ENCODE measurements at regions of chr10 and their contacts with region 1.

Region 1: DNA sequence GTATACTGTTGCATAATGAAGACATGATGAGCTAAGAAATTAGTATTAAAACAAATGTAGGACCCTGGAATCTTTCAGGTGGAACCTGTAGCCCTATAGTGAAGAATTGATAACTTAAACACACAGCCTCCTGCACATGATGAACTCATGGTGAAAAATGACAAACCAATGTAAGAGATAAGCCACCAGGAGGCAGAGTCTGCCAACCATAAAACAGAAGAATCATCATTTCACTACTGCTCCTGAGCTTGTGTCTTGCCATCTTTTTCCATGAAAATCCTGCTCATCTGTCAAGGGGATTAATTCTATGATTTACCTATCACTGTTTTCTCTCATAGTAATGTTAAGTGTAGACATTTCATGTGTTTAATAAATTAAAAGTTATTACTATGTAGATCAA is 363.9 kb downstream of the MALRD1 start:
- DNase-seq: no peak
- H3K4me3 ChIP-seq: no peak overlapping the region
- H3K27ac ChIP-seq: no peak overlapping the region
- H3K4me1 ChIP-seq: no peaks in the 10 kb centered on the region
- H3K27me3 ChIP-seq: no peaks in the 10 kb centered on the region
- CTCF ChIP-seq: peak; percentile 16 to 46 (median 28)
- EP300 ChIP-seq: no peak
- POLR2A ChIP-seq: no peak

Region 2: DNA sequence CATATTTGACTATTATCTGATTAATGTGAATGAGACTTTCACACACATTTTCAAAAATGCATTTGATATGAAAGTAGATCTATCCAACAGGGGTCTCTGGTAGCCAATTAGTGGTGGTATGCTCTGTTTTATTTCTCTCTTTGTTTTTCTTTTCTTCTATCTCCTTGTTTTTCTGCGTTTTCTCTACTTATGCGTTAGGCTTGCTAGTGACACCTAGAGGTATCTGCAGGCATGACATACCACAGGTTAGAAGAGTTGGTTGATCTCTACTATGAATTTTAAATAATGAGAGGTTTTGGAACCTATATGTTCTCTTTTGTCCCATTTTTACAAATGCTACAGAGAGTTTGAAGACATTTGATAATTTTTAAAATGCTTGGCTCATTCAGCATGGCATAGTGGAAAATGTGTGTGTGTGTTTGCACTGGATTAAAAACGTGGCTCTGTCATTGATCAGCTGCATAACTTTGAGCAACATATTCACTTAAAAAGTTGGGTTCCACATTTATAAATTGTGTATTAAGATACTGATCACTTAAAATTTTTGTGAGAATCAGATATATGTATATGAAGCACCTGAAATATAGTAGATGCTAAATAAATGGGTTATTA is 375.6 kb after region 1 on chr10:
- intact Hi-C with region 1: loop called (anchors 2 kb)
- DNase-seq: no peak
- H3K4me3 ChIP-seq: no peak overlapping the region
- H3K27ac ChIP-seq: no peak overlapping the region
- H3K4me1 ChIP-seq: no peaks in the 10 kb centered on the region
- H3K27me3 ChIP-seq: no peaks in the 10 kb centered on the region
- CTCF ChIP-seq: peak; percentile 49 to 76 (median 58)
- EP300 ChIP-seq: no peak
- POLR2A ChIP-seq: no peak

Region 3: GRCh38 chr10:20768843-20769242 is 1356.3 kb after region 1 on chr10:
- intact Hi-C with region 1: loop called (anchors 10 kb)
- DNase-seq: no peak
- H3K4me3 ChIP-seq: no peak overlapping the region
- H3K27ac ChIP-seq: no peak overlapping the region
- H3K4me1 ChIP-seq: peaks cover 0 to 5% (median 0%) of the 10 kb centered on the region in 4 donors
- H3K27me3 ChIP-seq: no peaks in the 10 kb centered on the region
- CTCF ChIP-seq: peak in 3 of 4 experiments; percentile 10 to 44 (median 16)
- EP300 ChIP-seq: no peak
- POLR2A ChIP-seq: no peak

Region 4: GRCh38 chr10:20858292-20859124 is 1446.0 kb after region 1 on chr10:
- intact Hi-C with region 1: loop called (anchors 5 kb)
- DNase-seq: no peak
- H3K4me3 ChIP-seq: no peak overlapping the region
- H3K27ac ChIP-seq: no peak overlapping the region
- H3K4me1 ChIP-seq: no peaks in the 10 kb centered on the region
- H3K27me3 ChIP-seq: no peaks in the 10 kb centered on the region
- CTCF ChIP-seq: peak in 2 of 4 experiments; percentile 10 to 40
- EP300 ChIP-seq: no peak
- POLR2A ChIP-seq: no peak